ENCODE measurements at regions of chr22 and their contacts with region 1.

Region 1: DNA sequence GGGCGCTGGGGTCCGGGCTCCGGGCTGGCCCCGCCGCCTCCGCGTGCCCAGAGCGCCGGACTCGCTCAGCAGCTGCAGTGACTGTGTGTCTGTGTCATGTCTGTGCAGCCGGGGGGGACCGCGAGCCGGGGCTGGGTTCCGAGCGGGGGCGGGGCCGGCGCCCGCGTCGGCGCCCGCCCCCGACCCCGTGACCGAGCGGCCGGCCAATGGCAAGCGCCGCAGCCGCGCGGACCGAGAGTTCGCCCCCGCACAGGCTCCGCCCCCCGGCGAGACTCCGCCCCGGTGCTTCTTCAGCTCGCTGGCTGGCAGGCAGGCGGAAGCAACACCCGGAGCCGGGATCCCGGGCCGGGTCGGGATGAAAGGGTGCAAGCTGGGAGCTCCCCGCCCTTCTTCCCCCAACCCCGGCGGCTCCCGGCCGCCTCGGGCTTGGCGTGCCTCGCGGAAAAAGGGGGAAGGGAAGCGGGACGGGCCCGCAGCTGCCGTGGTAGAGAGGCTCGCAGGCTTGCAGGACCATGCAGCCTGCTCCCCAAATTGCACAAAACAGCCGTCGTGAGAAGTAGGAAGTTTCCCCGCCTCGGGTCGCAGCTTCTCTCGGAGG is 750 bp upstream of the LARGE1 start:
- DNase-seq: peak; percentile 97
- ATAC-seq: peak; percentile 87
- H3K4me3 ChIP-seq: peak overlapping the region; percentile 34 to 89 (median 70)
- H3K4me3 Mint-ChIP-seq: peak overlapping the region; percentile 92
- H3K27ac ChIP-seq: no peak overlapping the region
- H3K27ac Mint-ChIP-seq: peak overlapping the region; percentile 72
- H3K4me1 ChIP-seq: peaks cover 41 to 45% of the 10 kb centered on the region in 2 donors
- H3K4me1 Mint-ChIP-seq: peaks cover 48% of the 10 kb centered on the region
- H3K27me3 ChIP-seq: peaks cover 0 to 22% (median 3%) of the 10 kb centered on the region in 4 experiments
- H3K27me3 Mint-ChIP-seq: no peaks in the 10 kb centered on the region
- CTCF ChIP-seq: no peak

Region 2: DNA sequence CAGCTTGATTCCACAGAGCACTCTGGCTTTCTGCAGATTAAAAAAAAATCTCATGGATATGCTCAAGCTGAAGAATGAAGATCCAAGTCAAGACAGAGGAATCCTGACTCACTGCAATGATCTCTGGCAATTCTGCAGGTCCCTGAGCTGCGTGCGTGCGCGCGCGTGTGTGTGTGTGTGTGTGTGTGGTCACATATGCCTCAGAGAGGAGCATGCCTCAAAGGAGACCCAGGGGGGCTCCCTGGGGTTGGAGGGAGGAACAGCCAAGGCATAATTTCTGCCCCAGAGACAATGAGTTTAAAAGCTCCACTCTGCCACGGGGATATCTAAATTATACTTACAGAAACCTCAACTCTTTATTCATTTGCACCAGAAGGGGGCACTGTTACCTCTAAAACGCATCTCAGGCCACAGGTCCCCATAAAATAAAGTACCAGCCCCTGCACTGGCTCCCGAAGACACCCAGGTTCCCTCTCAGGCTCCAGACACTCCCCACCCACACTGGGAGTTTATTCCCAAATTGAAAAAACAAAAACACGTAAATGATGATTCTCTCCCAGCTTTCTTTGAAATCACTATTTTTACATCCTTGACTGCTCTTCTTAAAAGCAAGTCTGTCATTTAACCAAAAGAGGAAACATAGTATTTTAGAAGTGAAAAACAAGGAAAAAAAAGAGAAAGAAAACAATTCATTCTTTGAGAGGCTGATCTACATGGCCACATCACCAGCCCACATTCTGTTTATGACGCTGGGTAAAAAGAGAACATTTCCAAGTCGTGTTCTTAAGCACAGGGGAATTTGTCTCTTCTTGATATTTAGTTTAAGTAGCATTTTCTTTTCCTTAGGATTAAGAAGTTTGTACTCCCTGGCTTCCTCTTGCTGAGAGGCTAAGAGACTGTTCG is 401.7 kb before region 1 on chr22:
- CTCF ChIA-PET with region 1: interaction called, 51 read pairs
- POLR2A ChIA-PET with region 1: interaction called, 9 read pairs
- intact Hi-C with region 1: loop called (anchors 1 kb)
- DNase-seq: peak; percentile 88
- ATAC-seq: peak; percentile 53
- H3K4me3 ChIP-seq: peak overlapping the region in 3 of 5 experiments; percentile 6 to 48 (median 7)
- H3K4me3 Mint-ChIP-seq: peak overlapping the region; percentile 75
- H3K27ac ChIP-seq: peak overlapping the region; percentile 38 to 75
- H3K27ac Mint-ChIP-seq: peak overlapping the region; percentile 87
- H3K4me1 ChIP-seq: peaks cover 52 to 55% of the 10 kb centered on the region in 2 donors
- H3K4me1 Mint-ChIP-seq: peaks cover 53% of the 10 kb centered on the region
- H3K27me3 ChIP-seq: no peaks in the 10 kb centered on the region
- H3K27me3 Mint-ChIP-seq: no peaks in the 10 kb centered on the region
- CTCF ChIP-seq: peak; percentile 79

Region 3: GRCh38 chr22:33841281-33842005 is 79.6 kb before region 1 on chr22:
- CTCF ChIA-PET with region 1: interaction called, 3 read pairs
- POLR2A ChIA-PET with region 1: no interaction called
- intact Hi-C with region 1: loop called (anchors 5 kb)
- DNase-seq: no peak
- ATAC-seq: peak; percentile 24
- H3K4me3 ChIP-seq: peak overlapping the region in 1 of 5 experiments; percentile 31
- H3K4me3 Mint-ChIP-seq: peak overlapping the region; percentile 74
- H3K27ac ChIP-seq: peak overlapping the region; percentile 10 to 27
- H3K27ac Mint-ChIP-seq: peak overlapping the region; percentile 67
- H3K4me1 ChIP-seq: peaks cover 15 to 18% of the 10 kb centered on the region in 2 donors
- H3K4me1 Mint-ChIP-seq: peaks cover 42% of the 10 kb centered on the region
- H3K27me3 ChIP-seq: no peaks in the 10 kb centered on the region
- H3K27me3 Mint-ChIP-seq: no peaks in the 10 kb centered on the region
- CTCF ChIP-seq: no peak

Region 4: GRCh38 chr22:33896575-33897447 is 24.2 kb before region 1 on chr22:
- CTCF ChIA-PET with region 1: interaction called, 6 read pairs
- POLR2A ChIA-PET with region 1: no interaction called
- intact Hi-C with region 1: loop called (anchors 2 kb)
- DNase-seq: peak; percentile 27
- ATAC-seq: peak; percentile 55
- H3K4me3 ChIP-seq: no peak overlapping the region
- H3K4me3 Mint-ChIP-seq: peak overlapping the region; percentile 72
- H3K27ac ChIP-seq: peak overlapping the region; percentile 19 to 56
- H3K27ac Mint-ChIP-seq: peak overlapping the region; percentile 59
- H3K4me1 ChIP-seq: peaks cover 28 to 29% of the 10 kb centered on the region in 2 donors
- H3K4me1 Mint-ChIP-seq: peaks cover 75% of the 10 kb centered on the region
- H3K27me3 ChIP-seq: no peaks in the 10 kb centered on the region
- H3K27me3 Mint-ChIP-seq: no peaks in the 10 kb centered on the region
- CTCF ChIP-seq: no peak

Region 5: DNA sequence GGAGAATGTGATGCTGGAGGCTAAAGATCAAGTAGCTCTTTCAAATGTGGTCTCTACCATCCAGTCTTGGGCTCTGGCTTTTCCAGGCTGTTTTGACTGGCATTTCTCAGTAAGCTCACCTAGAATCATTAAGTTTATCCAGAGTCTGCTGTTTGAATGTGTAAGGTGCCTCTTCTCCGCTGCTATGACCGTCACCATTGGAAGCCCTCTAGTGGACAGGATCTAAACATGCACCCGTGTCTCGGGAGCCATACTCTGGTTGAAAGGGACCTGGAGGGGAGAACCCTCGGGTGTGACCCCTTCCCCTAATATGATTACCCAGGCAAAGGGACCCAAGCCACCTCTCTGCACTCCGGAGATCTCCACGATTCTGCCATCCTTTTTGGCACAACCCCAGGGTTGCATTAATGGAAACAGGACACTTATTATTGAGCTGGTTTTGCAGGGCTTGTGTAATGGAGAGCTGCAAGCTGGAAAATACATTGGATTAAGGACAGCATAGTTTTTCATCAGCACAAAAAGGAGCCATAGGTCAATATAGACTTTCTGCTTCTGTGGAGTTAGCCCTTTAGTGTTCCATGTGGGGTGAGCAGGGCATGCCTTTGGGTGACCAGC is 190.3 kb after region 1 on chr22:
- CTCF ChIA-PET with region 1: interaction called, 68 read pairs
- POLR2A ChIA-PET with region 1: no interaction called
- intact Hi-C with region 1: loop called (anchors 1 kb)
- DNase-seq: peak; percentile 63
- ATAC-seq: peak; percentile 64
- H3K4me3 ChIP-seq: no peak overlapping the region
- H3K4me3 Mint-ChIP-seq: no peak overlapping the region
- H3K27ac ChIP-seq: no peak overlapping the region
- H3K27ac Mint-ChIP-seq: no peak overlapping the region
- H3K4me1 ChIP-seq: no peaks in the 10 kb centered on the region
- H3K4me1 Mint-ChIP-seq: no peaks in the 10 kb centered on the region
- H3K27me3 ChIP-seq: no peaks in the 10 kb centered on the region
- H3K27me3 Mint-ChIP-seq: peaks cover 12% of the 10 kb centered on the region
- CTCF ChIP-seq: peak; percentile 84

Measured in B cell (primary cell).